Activated CD4-positive, alpha-beta memory T cell treated with anti-CD3 and anti-CD28 coated beads for 36 hours (primary cell): ENCODE measurements at regions of chr2 and their contacts with region 1.

Region 1: GRCh38 chr2:84905181-84906107 is at the start of gene TMSB10:
- DNase-seq: peak; percentile 90
- H3K4me3 Mint-ChIP-seq: peak within 1 kb of the TSS; percentile 91
- H3K27ac Mint-ChIP-seq: peak within 1 kb of the TSS; percentile 93
- H3K4me1 Mint-ChIP-seq: peaks cover 66% of the 10 kb centered on the region
- H3K27me3 Mint-ChIP-seq: no peaks in the 10 kb centered on the region
- total RNA-seq, gene TMSB10: 2,535 to 2,567 TPM

Region 2: GRCh38 chr2:84757648-84758047 is 147.8 kb before region 1 on chr2:
- CTCF ChIA-PET with region 1: no interaction called
- POLR2A ChIA-PET with region 1: no interaction called
- intact Hi-C with region 1: no loop called
- DNase-seq: no peak
- H3K4me3 Mint-ChIP-seq: no peak overlapping the region
- H3K27ac Mint-ChIP-seq: no peak overlapping the region
- H3K4me1 Mint-ChIP-seq: peaks cover 13% of the 10 kb centered on the region
- H3K27me3 Mint-ChIP-seq: no peaks in the 10 kb centered on the region

Region 3: DNA sequence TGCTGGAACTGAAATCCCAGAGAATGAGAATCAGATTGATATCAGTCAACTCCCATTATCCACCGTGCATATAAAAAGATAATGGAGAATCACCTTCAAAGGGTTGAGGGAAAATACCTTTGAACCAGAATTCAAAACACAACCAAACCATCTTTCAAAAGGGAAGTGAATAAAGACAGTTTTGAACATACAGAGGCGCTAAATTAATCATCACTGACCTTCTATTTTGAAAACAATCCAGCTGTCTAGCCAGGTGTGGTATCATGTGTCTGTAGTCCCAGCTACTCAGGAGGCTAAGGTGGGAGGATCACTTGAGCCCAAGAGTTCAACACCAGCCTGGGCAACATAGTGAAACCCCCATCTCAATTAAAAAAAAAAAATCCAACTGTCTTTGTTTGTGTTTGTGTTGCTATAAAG is 88.2 kb before region 1 on chr2:
- CTCF ChIA-PET with region 1: no interaction called
- POLR2A ChIA-PET with region 1: no interaction called
- intact Hi-C with region 1: no loop called
- DNase-seq: peak; percentile 39
- H3K4me3 Mint-ChIP-seq: no peak overlapping the region
- H3K27ac Mint-ChIP-seq: no peak overlapping the region
- H3K4me1 Mint-ChIP-seq: peaks cover 31% of the 10 kb centered on the region
- H3K27me3 Mint-ChIP-seq: no peaks in the 10 kb centered on the region

Region 4: DNA sequence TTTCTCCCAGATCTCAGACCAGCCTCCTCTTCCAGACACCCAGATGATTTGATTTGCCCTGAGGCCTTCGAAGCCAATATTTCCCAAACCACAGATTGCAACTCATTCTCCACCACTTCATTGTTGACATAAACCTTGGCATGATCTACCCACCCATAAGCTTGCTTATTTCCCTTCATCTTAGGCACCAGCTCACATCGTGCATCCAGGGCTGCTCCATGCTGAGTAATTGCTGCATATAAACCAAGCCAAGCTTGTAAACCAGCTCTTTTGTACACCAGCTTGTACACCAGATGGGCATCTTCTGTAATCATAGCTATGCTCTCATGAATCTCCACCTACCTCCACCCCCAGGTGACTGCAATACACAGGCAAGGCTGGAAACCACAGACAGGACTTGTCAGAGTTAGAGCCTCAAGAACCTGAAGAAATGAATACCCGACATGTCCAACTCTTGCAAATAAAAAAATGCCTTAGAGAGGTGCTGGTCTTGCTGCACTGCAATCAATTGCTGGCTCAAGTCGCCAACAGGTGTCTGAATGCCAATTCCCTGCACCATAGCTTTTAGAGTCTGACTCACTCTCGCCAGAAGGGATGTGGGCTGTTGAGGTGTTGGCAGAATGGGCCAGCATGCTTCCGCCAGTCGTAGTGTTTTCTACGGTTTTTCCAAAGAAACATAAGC is 56.0 kb before region 1 on chr2:
- CTCF ChIA-PET with region 1: no interaction called
- POLR2A ChIA-PET with region 1: no interaction called
- intact Hi-C with region 1: no loop called
- DNase-seq: peak; percentile 71
- H3K4me3 Mint-ChIP-seq: peak overlapping the region; percentile 11
- H3K27ac Mint-ChIP-seq: peak overlapping the region; percentile 84
- H3K4me1 Mint-ChIP-seq: peaks cover 84% of the 10 kb centered on the region
- H3K27me3 Mint-ChIP-seq: no peaks in the 10 kb centered on the region

Region 5: DNA sequence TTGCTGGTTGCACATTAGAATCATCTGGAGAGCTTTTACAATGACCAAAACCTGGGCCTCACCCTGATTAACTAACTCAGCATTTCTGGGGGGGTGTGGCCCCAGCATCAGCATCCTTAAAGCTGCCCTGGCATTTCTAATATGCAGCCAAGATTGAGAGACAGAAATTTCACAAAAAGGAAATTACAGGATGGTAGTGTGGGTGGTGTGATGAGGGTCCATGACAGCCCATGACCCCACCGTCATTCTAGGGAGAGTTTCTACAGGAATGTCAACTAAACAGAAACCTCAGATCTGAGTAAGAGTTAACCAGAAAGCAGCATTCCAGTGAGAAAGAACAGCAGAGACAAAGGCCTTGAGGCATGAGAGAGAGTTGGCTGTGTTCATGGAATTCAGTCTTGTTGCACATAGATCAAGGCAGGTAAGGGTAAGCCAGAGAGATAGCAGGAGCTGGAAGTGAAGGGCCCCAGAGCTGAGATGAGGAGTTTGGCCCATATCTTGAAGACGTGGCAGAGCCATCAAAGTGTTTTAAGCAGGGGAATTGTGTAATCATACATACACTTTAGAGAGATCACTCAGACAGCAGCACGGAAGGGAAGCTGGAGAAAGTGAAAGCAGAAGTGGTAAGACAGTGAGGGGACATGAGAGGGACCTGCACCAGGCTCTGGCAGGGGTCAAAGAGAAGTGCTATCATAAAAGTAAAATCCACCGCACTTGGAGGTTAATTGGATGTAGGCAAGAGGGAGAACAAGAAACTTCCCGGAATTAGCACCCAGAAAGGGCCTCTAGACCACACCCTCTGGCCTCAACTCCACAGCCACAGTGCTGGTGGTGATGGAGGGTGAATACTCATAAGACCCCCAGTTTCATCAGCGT is 16.8 kb before region 1 on chr2:
- CTCF ChIA-PET with region 1: interaction called, 5 read pairs
- POLR2A ChIA-PET with region 1: interaction called, 39 read pairs
- intact Hi-C with region 1: loop called (anchors 1 kb)
- DNase-seq: peak; percentile 71
- H3K4me3 Mint-ChIP-seq: peak overlapping the region; percentile 58
- H3K27ac Mint-ChIP-seq: peak overlapping the region; percentile 90
- H3K4me1 Mint-ChIP-seq: peaks cover 47% of the 10 kb centered on the region
- H3K27me3 Mint-ChIP-seq: no peaks in the 10 kb centered on the region

Region 6: DNA sequence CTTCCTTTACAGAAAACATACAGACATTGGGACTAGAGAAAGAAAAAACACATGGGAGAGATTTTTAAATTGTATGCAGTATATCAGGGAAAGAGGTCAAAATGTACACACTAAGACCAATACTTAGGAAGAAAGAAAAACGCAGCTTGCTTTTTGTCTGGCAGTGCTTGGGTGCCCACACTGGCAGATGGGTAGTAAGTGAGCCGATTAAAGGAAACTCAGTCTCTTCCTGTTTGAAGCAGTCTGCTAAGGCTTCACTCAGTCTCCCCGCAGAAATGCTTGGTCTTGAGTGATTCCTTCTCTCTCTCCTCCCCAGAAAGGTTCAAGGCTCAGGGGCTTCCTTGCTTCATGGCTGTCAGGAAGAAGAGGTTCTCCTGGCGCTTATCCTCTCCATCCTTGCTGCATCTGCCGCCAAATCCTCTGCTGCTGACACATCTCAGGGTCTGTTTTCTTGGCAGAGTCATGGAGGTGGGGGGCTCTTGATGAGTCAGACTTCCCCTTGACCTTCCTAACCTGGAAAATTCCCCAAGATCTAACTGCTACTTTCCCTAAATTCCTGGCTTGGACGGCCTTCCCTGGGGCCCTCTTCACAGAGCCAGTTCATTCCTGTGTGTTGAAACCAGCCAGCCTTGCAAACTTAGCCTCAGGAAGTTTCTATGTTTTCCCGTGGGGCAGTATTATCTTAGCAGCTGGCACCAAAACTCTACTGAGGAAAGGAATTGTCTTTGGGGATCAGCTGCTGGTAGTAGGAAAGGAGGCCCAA is 10.5 kb before region 1 on chr2:
- CTCF ChIA-PET with region 1: interaction called, 5 read pairs
- POLR2A ChIA-PET with region 1: interaction called, 39 read pairs
- intact Hi-C with region 1: loop called (anchors 1 kb)
- DNase-seq: no peak
- H3K4me3 Mint-ChIP-seq: peak overlapping the region; percentile 30
- H3K27ac Mint-ChIP-seq: peak overlapping the region; percentile 85
- H3K4me1 Mint-ChIP-seq: peaks cover 59% of the 10 kb centered on the region
- H3K27me3 Mint-ChIP-seq: no peaks in the 10 kb centered on the region

Region 7: DNA sequence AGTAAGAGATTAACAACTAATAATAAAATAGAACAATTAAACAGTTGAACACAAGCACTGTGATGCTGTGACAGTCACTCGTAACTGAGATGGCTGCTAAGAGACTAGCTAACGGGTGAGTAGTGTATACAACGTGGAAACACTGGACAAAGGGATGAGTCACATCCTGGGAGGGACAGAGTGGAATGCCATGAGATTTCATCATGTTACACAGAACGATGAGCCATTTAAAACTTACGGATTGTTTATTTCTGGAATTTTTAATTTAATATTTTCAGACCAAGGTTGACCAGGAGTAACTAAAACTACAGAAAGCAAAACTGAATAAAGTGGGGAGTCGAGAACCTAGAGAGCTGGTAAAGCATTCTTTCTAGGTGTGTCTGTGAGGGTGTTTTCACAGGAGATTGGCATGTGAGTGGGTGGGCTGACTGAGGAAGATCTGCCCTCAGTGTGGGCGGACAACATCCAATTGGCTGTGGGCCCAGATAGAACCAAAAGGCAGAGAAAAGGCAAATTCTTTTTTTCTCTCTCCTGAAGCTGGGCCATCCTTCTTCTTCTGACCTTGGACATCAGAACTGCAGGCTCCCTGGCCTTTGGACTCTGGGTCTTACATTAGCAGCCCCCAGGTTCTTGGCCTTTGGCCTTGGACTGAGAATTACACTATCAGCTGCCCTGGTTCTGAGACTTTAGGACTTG is 14.6 kb after region 1 on chr2:
- CTCF ChIA-PET with region 1: interaction called, 117 read pairs
- POLR2A ChIA-PET with region 1: interaction called, 41 read pairs
- intact Hi-C with region 1: loop called (anchors 1 kb)
- DNase-seq: peak; percentile 74
- H3K4me3 Mint-ChIP-seq: peak overlapping the region; percentile 37
- H3K27ac Mint-ChIP-seq: peak overlapping the region; percentile 82
- H3K4me1 Mint-ChIP-seq: peaks cover 39% of the 10 kb centered on the region
- H3K27me3 Mint-ChIP-seq: no peaks in the 10 kb centered on the region

Region 8: DNA sequence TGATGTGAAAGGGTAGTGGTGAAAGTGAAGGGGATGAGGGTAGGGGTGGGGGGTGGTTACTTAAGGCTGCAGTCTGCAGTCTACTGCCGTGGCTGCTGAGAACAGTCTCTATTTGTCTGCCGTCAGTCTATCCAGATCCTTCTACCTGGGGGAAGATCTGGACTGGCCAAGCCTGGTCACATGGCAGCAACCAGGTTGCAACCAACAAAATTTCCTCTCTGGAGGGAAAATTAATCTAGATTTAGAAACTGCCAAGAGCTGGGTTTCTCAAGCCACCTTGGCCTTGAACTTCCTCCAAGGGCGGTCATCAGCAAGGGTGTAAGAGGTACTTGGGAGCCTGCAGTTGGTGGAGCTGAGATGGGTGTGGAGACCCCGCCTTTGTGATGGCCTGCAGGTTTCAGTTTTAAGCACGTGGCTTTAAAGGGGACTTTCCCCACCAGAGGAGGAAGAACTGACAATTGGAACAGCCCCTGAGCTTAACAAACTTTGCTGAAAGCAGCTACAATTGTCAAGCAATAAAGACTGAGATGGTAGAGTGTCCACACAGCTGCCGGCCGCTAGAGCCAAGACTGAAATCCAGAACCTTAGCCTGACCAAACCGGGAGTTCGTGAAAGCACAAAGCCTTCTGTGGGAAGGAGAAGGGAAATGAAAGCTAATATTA is 34.1 kb after region 1 on chr2:
- CTCF ChIA-PET with region 1: interaction called, 3 read pairs
- POLR2A ChIA-PET with region 1: interaction called, 23 read pairs
- intact Hi-C with region 1: no loop called
- DNase-seq: peak; percentile 87
- H3K4me3 Mint-ChIP-seq: peak overlapping the region; percentile 62
- H3K27ac Mint-ChIP-seq: peak overlapping the region; percentile 93
- H3K4me1 Mint-ChIP-seq: peaks cover 66% of the 10 kb centered on the region
- H3K27me3 Mint-ChIP-seq: no peaks in the 10 kb centered on the region

Region 9: GRCh38 chr2:84946204-84947009 is 41.0 kb after region 1 on chr2:
- CTCF ChIA-PET with region 1: interaction called, 3 read pairs
- POLR2A ChIA-PET with region 1: interaction called, 11 read pairs
- intact Hi-C with region 1: no loop called
- DNase-seq: peak; percentile 88
- H3K4me3 Mint-ChIP-seq: peak overlapping the region; percentile 51
- H3K27ac Mint-ChIP-seq: peak overlapping the region; percentile 93
- H3K4me1 Mint-ChIP-seq: peaks cover 44% of the 10 kb centered on the region
- H3K27me3 Mint-ChIP-seq: no peaks in the 10 kb centered on the region

Region 10: DNA sequence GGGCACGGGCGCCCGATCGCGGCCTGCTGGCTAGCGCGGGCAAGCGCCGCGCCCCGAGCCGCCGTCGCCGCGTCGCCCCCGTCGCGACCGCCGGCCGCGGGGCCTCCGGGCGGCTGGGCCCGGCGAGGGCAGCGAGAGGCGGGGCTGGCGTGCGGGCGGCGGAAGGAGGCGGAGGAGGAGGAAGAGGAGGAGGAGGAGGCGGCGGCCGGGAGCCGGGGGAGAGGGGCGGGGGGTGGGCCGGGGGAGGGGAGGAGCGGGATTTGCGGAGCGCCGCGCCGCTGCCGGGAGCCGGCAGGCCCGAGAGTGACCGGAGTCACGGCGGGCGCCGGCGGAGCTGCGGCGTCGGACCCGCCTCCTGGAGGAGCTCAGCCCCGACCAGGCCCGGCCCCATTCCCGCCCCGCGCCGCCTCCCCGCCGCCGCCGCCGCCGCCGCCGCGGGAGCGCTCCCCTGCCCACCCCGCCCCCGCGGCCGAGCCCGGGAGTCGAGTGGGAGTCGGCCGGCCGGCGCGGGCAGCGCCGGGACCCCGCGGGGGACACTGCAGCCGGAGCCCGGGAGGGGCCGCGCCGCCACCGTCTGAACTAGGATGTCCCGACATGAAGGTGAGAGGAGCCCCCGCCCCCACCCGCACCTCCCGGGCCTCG is 65.5 kb after region 1 on chr2 and contains the start of gene KCMF1:
- CTCF ChIA-PET with region 1: no interaction called
- POLR2A ChIA-PET with region 1: interaction called, 5 read pairs
- intact Hi-C with region 1: loop called (anchors 2 kb)
- DNase-seq: peak; percentile 78
- H3K4me3 Mint-ChIP-seq: peak within 1 kb of the TSS; percentile 100
- H3K27ac Mint-ChIP-seq: peak within 1 kb of the TSS; percentile 100
- H3K4me1 Mint-ChIP-seq: peaks cover 43% of the 10 kb centered on the region
- H3K27me3 Mint-ChIP-seq: no peaks in the 10 kb centered on the region
- total RNA-seq, gene KCMF1: 90.5 to 94.1 TPM